ENCODE measurements at regions of chr5 and their contacts with region 1.

Region 1: DNA sequence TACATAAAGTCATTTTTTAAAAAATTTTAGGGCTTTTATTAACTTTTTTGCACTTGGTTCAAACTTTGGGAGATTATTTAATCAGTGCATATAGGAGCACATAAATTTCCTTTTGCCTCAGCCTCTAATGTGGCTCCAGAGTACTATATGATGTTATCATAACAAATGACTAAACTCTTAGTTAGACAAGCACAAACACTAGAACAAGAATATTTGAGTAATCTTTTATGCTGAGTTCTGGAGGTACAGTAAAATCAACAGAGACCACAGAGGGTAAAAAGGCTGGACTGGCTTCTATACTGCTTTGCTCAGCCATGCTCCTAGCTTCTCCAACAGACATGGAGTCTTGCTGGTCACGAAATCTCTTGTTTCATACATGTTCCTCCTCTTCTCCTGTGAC is 52.5 kb upstream of the SGCD start:
- DNase-seq: no peak
- ATAC-seq: no peak
- H3K4me3 Mint-ChIP-seq: no peak overlapping the region
- H3K27ac Mint-ChIP-seq: no peak overlapping the region
- H3K4me1 Mint-ChIP-seq: no peaks in the 10 kb centered on the region
- H3K27me3 Mint-ChIP-seq: peaks cover 2% of the 10 kb centered on the region

Region 2: DNA sequence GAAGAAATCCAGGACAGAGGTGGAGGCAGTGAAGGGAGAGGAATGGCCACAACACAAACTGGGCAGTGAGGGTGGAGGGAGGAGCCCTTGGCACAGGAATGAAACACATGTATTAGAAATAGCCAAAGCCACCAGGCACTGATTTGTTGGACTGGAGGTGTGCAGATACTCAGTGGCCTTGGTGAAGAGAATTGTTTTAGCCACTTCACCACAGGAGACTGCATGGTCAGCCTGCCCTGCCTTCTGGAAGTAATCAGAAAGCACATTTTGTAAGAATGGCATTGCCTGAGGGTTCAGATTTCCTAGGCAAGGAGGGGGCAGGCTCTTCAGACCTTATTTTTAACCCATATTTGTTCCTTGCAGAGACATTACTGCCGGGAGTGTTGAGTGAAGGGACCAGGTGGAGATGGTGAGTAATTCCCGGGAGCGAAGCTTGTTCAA is 54.7 kb after region 1 on chr5:
- CTCF ChIA-PET with region 1: no interaction called
- POLR2A ChIA-PET with region 1: no interaction called
- intact Hi-C with region 1: loop called in 1 of 2 experiments (anchors 2 kb)
- DNase-seq: no peak
- ATAC-seq: no peak
- H3K4me3 Mint-ChIP-seq: no peak overlapping the region
- H3K27ac Mint-ChIP-seq: no peak overlapping the region
- H3K4me1 Mint-ChIP-seq: no peaks in the 10 kb centered on the region
- H3K27me3 Mint-ChIP-seq: peaks cover 18% of the 10 kb centered on the region

Region 3: GRCh38 chr5:156359476-156359875 is 85.0 kb after region 1 on chr5:
- CTCF ChIA-PET with region 1: no interaction called
- POLR2A ChIA-PET with region 1: no interaction called
- intact Hi-C with region 1: no loop called
- DNase-seq: no peak
- ATAC-seq: no peak
- H3K4me3 Mint-ChIP-seq: no peak overlapping the region
- H3K27ac Mint-ChIP-seq: no peak overlapping the region
- H3K4me1 Mint-ChIP-seq: no peaks in the 10 kb centered on the region
- H3K27me3 Mint-ChIP-seq: peaks cover 8% of the 10 kb centered on the region

Region 4: DNA sequence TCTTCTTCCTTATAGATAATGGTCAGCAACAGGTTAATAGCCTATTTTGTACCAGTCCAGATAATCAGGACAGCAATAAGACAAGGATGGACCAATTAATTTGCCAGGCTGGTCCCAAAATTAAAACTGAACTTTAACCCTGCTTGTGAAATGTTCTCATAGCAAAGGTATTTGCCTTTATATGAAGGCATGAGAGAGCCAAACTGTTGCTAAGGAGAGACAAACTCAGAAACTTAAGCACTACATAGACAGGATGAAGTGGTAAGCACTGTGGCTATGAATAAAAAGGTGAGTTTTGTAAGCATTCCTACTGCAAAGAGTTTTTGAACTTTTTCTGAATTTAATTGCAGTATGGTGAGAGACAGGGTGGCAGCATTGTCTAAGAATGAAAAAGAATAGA is 400.9 kb after region 1 on chr5:
- CTCF ChIA-PET with region 1: no interaction called
- POLR2A ChIA-PET with region 1: no interaction called
- intact Hi-C with region 1: no loop called
- DNase-seq: no peak
- ATAC-seq: no peak
- H3K4me3 Mint-ChIP-seq: no peak overlapping the region
- H3K27ac Mint-ChIP-seq: no peak overlapping the region
- H3K4me1 Mint-ChIP-seq: no peaks in the 10 kb centered on the region
- H3K27me3 Mint-ChIP-seq: peaks cover 5% of the 10 kb centered on the region

Region 5: GRCh38 chr5:156947796-156948324 is 673.4 kb after region 1 on chr5:
- CTCF ChIA-PET with region 1: no interaction called
- POLR2A ChIA-PET with region 1: no interaction called
- intact Hi-C with region 1: no loop called
- DNase-seq: peak; percentile 51
- ATAC-seq: peak; percentile 71
- H3K4me3 Mint-ChIP-seq: no peak overlapping the region
- H3K27ac Mint-ChIP-seq: no peak overlapping the region
- H3K4me1 Mint-ChIP-seq: peaks cover 5% of the 10 kb centered on the region
- H3K27me3 Mint-ChIP-seq: no peaks in the 10 kb centered on the region

Region 6: DNA sequence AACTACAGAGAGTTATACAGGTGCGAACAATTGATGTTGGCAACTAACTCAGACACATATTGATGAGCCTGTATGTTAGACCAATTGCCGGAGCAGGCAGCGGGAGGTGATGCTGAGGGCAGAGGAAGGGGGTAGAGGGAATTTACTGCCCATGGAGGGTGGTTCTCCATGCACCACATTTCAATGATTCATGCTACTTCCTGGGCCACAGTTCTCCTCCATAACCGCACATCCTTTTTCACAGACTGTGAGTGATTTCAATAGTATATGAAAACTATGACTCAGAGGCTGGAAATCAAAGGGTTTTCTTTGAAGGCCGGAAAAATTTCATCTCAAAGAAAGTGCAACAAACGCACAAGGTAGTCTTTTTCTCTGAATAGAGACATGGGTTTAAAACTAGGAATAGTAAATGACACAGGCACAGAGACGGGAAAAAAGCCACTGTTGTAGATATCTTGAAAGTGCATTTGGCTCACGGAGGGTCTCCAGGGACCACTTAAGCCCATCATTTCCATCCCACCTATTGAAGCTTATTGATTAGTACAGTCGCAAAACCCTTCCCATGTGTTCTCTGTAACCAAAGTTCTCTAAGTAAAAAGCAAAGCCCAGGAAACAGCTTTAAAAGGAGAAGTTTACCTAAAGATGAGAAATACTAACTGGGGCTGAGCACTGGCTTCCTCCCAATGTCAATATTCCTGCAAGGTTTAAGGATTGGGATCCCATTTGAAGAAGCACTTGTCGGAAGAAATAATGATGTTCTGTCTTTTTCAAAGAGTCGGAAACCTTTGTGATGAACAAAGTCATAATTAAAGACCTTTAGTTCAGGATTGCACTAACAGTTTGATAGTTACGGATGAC is 1329.1 kb after region 1 on chr5:
- CTCF ChIA-PET with region 1: no interaction called
- POLR2A ChIA-PET with region 1: no interaction called
- intact Hi-C with region 1: no loop called
- DNase-seq: peak; percentile 78
- ATAC-seq: peak; percentile 44
- H3K4me3 Mint-ChIP-seq: peak overlapping the region; percentile 49
- H3K27ac Mint-ChIP-seq: peak overlapping the region; percentile 79
- H3K4me1 Mint-ChIP-seq: peaks cover 88% of the 10 kb centered on the region
- H3K27me3 Mint-ChIP-seq: no peaks in the 10 kb centered on the region